Cardiac septum (tissue), 1 donor: ENCODE measurements at regions of chr18 and their contacts with region 1.

Region 1: DNA sequence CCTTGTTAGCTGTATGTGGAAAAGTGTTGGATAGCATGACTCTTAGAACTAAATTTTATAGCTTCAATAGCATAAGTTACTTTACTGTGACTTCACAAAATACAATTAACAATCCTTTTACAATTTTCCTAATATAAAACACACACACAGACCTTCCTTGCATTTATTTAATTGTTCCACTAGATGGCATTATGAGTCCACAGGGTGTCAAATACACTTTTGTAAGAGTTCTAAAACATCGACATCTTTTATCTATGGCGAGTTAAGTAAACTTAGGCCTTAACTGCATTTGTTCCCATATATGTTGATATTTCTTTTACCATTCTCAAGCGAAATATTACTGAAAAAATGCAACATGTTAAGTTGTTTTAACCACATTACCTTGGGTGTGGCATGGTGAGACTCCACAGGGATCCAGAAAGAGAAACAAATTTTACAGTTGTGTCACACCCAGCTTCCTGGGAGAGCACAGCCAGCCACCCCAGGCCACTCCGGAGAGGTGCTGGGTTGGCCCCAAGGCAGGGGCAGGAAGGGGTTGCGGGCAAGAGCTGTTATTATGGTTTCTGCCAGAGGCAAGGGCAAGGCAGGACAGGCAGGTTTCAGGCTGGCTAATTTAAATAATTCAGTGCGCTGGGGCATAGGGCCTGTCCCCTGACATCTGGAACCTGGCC is 312.4 kb upstream of the MC4R start:
- DNase-seq: no peak

Region 2: DNA sequence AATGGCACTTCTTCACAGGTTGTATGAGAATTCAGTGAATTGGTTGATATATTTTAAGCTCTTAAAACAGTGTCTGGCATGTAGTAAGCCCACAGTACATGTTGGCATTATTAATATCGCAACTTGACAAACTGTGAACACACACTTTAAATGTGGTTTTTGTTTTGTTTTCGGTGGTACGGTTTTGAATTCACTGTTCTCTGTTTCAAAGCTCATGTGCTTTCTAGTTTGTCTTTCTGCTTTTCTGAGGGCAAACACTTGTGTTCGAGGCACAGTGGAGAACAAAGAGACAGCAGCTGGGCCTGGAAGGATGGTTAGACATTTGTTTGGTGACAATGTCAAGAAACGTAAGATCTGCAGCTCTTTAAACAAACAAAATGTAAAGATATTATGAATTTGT is 35.9 kb before region 1 on chr18:
- intact Hi-C with region 1: no loop called
- DNase-seq: no peak

Region 3: DNA sequence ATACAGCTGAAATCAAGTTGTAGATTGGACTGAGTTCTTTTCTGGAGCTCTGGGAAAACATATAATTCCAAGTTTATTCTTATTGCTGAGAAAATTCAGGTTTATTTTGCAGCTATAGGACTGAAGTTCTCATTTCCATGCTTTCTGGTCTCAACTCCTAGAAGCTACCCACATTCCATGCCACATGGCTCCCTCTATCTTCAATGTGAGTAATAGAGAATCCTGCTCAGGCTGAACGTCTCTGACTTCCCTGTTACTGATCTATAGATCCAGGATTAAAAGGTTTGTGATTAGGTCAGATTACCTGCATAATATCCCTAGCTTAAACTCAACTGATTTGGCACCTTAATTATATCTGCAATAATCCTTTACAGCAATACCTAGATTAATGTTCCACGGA is 141.4 kb after region 1 on chr18:
- intact Hi-C with region 1: loop called (anchors 10 kb)
- DNase-seq: no peak